ENCODE measurements at regions of chr9 and their contacts with region 1.

Region 1: DNA sequence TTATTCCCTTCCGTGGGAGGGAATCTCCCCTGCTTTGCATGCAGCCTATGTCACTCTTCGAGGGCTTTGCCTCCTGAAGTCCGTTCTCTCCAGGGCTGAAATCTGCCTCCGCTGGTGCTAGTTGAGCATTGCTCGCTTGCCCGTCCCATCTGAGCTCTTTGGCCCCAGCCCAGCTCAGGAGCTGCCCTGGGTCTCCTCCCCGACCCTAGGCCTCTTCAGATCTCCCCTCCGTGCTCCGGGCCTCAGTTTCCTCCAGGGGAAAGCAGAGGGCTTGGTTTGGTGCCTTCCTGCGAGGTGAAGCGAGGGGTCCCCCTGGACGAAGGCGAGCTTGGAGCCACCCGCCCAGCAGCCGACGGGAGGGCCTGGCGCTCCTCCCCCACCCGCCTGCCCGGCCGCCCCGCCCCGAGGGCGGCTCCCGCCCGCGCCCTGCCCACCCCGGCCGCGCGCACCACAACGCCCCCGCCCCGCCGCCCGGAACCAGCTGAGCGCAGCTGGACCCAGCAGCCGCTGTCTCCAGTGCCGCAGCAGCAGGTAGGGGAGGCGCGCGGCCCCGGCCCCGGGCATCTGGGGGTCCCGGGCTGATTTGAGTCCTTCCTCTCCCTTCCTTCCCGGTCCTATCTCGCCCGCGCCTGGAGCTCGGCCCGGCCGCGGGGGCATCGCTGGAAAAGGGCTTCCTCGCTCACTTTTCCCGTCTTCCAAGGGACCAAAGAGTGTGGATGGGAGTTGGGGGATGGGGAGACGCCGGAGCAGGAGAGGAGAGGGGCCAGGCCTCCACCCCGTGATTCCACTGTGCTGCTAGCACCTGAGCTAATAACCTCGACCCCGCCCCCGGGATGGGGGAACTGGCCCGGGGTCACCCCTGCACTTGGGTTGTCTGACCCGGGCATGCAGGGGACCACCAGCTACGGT is at the start of gene GSN:
- DNase-seq: no peak
- H3K4me3 ChIP-seq: peak within 1 kb of the TSS; percentile 91
- CTCF ChIP-seq: no peak

Region 2: GRCh38 chr9:121222524-121223171 is 45.3 kb before region 1 on chr9:
- CTCF ChIA-PET with region 1: interaction called, 14 read pairs
- POLR2A ChIA-PET with region 1: no interaction called
- DNase-seq: no peak
- H3K4me3 ChIP-seq: no peak overlapping the region
- CTCF ChIP-seq: peak; percentile 58

Region 3: GRCh38 chr9:121246821-121247561 is 21.0 kb before region 1 on chr9:
- CTCF ChIA-PET with region 1: interaction called, 12 read pairs
- POLR2A ChIA-PET with region 1: interaction called, 3 read pairs
- DNase-seq: peak; percentile 77
- H3K4me3 ChIP-seq: no peak overlapping the region
- CTCF ChIP-seq: no peak

Region 4: GRCh38 chr9:121286973-121287741 is 19.2 kb after region 1 on chr9:
- CTCF ChIA-PET with region 1: interaction called, 39 read pairs
- POLR2A ChIA-PET with region 1: interaction called, 11 read pairs
- DNase-seq: peak; percentile 58
- H3K4me3 ChIP-seq: peak overlapping the region; percentile 13
- CTCF ChIP-seq: peak; percentile 11

Region 5: GRCh38 chr9:121399883-121400607 is 132.1 kb after region 1 on chr9:
- CTCF ChIA-PET with region 1: interaction called, 32 read pairs
- POLR2A ChIA-PET with region 1: interaction called, 4 read pairs
- DNase-seq: peak; percentile 37
- H3K4me3 ChIP-seq: no peak overlapping the region
- CTCF ChIP-seq: peak; percentile 28